ENCODE measurements at regions of chr2 and their contacts with region 1.

Region 1: GRCh38 chr2:180077295-180077906 is 70.3 kb upstream of the CWC22 start:
- DNase-seq: no peak
- ATAC-seq: no peak
- H3K4me3 ChIP-seq: no peak overlapping the region
- H3K27ac ChIP-seq: no peak overlapping the region
- H3K4me1 ChIP-seq: no peaks in the 10 kb centered on the region
- H3K27me3 ChIP-seq: peaks cover 0 to 6% (median 0%) of the 10 kb centered on the region in 9 donors
- CTCF ChIP-seq: peak; percentile 33 to 61 (median 49)
- POLR2A ChIP-seq: no peak

Region 2: DNA sequence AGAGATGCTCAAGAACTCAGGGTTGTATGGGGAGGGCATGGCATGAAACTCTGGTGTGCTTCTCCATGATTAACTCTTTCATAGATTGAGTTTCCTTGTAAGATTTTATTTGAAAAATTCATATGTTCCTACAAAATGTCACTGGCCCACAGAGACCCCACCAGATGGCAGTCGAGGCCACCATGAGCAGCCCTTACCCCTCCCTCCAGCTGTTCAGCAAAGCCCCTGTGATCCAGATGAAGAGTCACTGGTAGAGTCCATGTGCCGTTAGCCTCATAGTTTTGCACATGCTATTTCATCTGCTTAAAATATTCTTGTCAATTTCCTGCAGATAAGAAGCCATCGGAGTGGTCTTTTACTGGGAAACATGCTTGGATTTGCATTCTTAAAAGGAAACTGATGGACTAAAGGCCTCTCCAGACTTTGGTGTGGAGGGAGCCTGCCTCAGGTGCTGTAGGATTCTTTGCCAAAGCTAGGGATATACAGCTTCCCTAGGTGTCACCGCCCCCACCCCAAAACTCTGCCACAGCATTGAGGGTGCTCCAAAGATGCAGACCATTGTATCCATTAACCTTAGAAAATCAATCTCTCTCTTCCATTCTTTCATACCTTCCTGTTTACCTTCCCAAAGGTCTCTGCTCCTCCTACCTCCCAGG is 234.8 kb before region 1 on chr2:
- intact Hi-C with region 1: loop called in 6 of 10 experiments (anchors 5 to 10 kb)
- DNase-seq: no peak
- ATAC-seq: no peak
- H3K4me3 ChIP-seq: no peak overlapping the region
- H3K27ac ChIP-seq: no peak overlapping the region
- H3K4me1 ChIP-seq: no peaks in the 10 kb centered on the region
- H3K27me3 ChIP-seq: peaks cover 0 to 4% (median 0%) of the 10 kb centered on the region in 9 donors
- CTCF ChIP-seq: peak in 8 of 12 donors; percentile 14 to 37 (median 23)
- POLR2A ChIP-seq: no peak

Region 3: DNA sequence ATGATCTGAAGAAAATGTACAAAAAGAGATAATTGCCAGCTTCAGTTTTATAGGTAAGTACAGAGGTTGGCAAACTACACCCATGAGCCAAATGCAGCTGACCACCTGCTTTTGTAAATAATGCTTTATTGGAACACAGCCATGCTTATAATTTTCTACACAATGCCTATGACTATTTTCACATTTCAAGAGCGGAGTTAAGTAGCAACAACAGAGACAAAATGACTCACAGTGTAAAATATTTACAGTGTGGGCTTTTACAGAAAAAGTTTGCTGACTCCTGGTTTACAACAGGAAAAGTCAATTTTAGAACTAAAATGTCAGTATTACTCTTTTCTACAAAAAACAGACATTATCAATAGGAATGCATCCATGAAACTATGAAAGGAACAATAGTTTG is 96.3 kb before region 1 on chr2:
- intact Hi-C with region 1: no loop called
- DNase-seq: no peak
- ATAC-seq: no peak
- H3K4me3 ChIP-seq: no peak overlapping the region
- H3K27ac ChIP-seq: no peak overlapping the region
- H3K4me1 ChIP-seq: peaks cover 0 to 5% (median 0%) of the 10 kb centered on the region in 12 donors
- H3K27me3 ChIP-seq: no peaks in the 10 kb centered on the region
- CTCF ChIP-seq: no peak
- POLR2A ChIP-seq: no peak

Region 4: GRCh38 chr2:180143633-180144337 is 66.4 kb after region 1 on chr2:
- intact Hi-C with region 1: no loop called
- DNase-seq: no peak
- ATAC-seq: no peak
- H3K4me3 ChIP-seq: no peak overlapping the region
- H3K27ac ChIP-seq: no peak overlapping the region
- H3K4me1 ChIP-seq: no peaks in the 10 kb centered on the region
- H3K27me3 ChIP-seq: peaks cover 0 to 5% (median 0%) of the 10 kb centered on the region in 9 donors
- CTCF ChIP-seq: no peak
- POLR2A ChIP-seq: no peak

Measured in heart left ventricle (tissue), 16 donors.